Mammary epithelial cell (primary cell): ENCODE measurements at regions of chr14 and their contacts with region 1.

Region 1: GRCh38 chr14:22766456-22767322 is at the start of gene OXA1L:
- DNase-seq: peak; percentile 94
- H3K4me3 ChIP-seq: peak within 1 kb of the TSS; percentile 76 to 96 (median 78)
- H3K27ac ChIP-seq: peak within 1 kb of the TSS; percentile 92
- H3K4me1 ChIP-seq: peaks cover 12% of the 10 kb centered on the region
- H3K27me3 ChIP-seq: no peaks in the 10 kb centered on the region
- CTCF ChIP-seq: no peak
- total RNA-seq, gene OXA1L: 34.3 to 76.3 TPM

Region 2: GRCh38 chr14:21780429-21781084 is 986.1 kb before region 1 on chr14:
- CTCF ChIA-PET with region 1: no interaction called
- dilution Hi-C with region 1: no loop called
- in situ Hi-C with region 1: no loop called
- intact Hi-C with region 1: no loop called
- DNase-seq: no peak
- H3K4me3 ChIP-seq: no peak overlapping the region
- H3K27ac ChIP-seq: no peak overlapping the region
- H3K4me1 ChIP-seq: no peaks in the 10 kb centered on the region
- H3K27me3 ChIP-seq: no peaks in the 10 kb centered on the region
- CTCF ChIP-seq: no peak

Region 3: GRCh38 chr14:22358726-22359125 is 408.0 kb before region 1 on chr14:
- CTCF ChIA-PET with region 1: no interaction called
- dilution Hi-C with region 1: no loop called
- in situ Hi-C with region 1: no loop called
- intact Hi-C with region 1: no loop called
- DNase-seq: no peak
- H3K4me3 ChIP-seq: no peak overlapping the region
- H3K27ac ChIP-seq: no peak overlapping the region
- H3K4me1 ChIP-seq: no peaks in the 10 kb centered on the region
- H3K27me3 ChIP-seq: peaks cover 4% of the 10 kb centered on the region
- CTCF ChIP-seq: no peak

Region 4: GRCh38 chr14:22386924-22387775 is 379.5 kb before region 1 on chr14:
- CTCF ChIA-PET with region 1: no interaction called
- dilution Hi-C with region 1: no loop called
- in situ Hi-C with region 1: no loop called
- intact Hi-C with region 1: loop called (anchors 10 kb)
- DNase-seq: peak; percentile 39
- H3K4me3 ChIP-seq: no peak overlapping the region
- H3K27ac ChIP-seq: no peak overlapping the region
- H3K4me1 ChIP-seq: peaks cover 16% of the 10 kb centered on the region
- H3K27me3 ChIP-seq: peaks cover 4% of the 10 kb centered on the region
- CTCF ChIP-seq: peak; percentile 48 to 77

Region 5: GRCh38 chr14:22668417-22668816 is 98.3 kb before region 1 on chr14:
- CTCF ChIA-PET with region 1: no interaction called
- dilution Hi-C with region 1: loop called (anchors 5 kb)
- in situ Hi-C with region 1: no loop called
- intact Hi-C with region 1: no loop called
- DNase-seq: no peak
- H3K4me3 ChIP-seq: no peak overlapping the region
- H3K27ac ChIP-seq: no peak overlapping the region
- H3K4me1 ChIP-seq: no peaks in the 10 kb centered on the region
- H3K27me3 ChIP-seq: no peaks in the 10 kb centered on the region
- CTCF ChIP-seq: no peak

Region 6: DNA sequence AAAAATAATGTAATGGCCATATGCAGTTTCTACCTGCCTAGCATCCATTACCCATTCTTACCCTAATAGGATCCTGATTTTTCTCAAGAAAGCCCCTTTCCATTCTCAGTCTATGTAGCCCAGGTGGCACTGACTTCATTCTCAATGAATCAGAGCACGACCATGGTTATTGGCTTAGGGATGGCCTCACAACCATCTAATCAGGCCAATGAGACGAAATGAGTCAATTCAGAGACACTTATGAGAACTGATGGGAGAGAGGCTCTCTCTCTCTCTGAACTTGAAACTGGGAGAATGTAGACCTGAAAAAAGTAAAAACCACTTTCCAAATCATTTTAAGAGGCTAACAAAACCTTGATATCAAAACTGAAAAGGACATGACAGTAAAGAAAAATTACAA is 45.5 kb before region 1 on chr14:
- CTCF ChIA-PET with region 1: no interaction called
- dilution Hi-C with region 1: loop called (anchors 5 kb)
- in situ Hi-C with region 1: no loop called
- intact Hi-C with region 1: no loop called
- DNase-seq: no peak
- H3K4me3 ChIP-seq: no peak overlapping the region
- H3K27ac ChIP-seq: no peak overlapping the region
- H3K4me1 ChIP-seq: no peaks in the 10 kb centered on the region
- H3K27me3 ChIP-seq: no peaks in the 10 kb centered on the region
- CTCF ChIP-seq: no peak

Region 7: GRCh38 chr14:22753586-22753985 is 13.1 kb before region 1 on chr14:
- CTCF ChIA-PET with region 1: no interaction called
- dilution Hi-C with region 1: no loop called
- in situ Hi-C with region 1: no loop called
- intact Hi-C with region 1: no loop called
- DNase-seq: no peak
- H3K4me3 ChIP-seq: no peak overlapping the region
- H3K27ac ChIP-seq: no peak overlapping the region
- H3K4me1 ChIP-seq: no peaks in the 10 kb centered on the region
- H3K27me3 ChIP-seq: peaks cover 2% of the 10 kb centered on the region
- CTCF ChIP-seq: no peak

Region 8: DNA sequence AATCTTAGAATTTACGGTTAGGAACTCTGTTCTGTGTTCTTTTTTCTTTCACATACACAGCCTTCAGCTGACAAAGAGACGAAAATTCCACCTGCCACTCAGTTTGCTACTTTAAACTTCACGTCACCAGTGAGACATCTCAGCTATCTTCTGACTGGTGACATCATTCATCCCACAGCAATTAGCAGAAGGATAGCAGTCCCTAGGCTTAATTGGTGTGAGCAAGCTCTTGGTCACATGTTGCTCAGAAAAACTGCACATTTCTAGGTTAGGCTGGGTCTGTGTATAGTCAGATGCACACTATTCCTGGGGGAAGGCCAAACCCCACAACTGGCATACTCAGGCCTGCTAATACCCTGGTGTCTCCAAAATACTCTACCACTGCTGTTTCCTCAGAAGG is 24.6 kb after region 1 on chr14:
- CTCF ChIA-PET with region 1: no interaction called
- dilution Hi-C with region 1: no loop called
- in situ Hi-C with region 1: no loop called
- intact Hi-C with region 1: loop called (anchors 2 kb)
- DNase-seq: peak; percentile 78
- H3K4me3 ChIP-seq: no peak overlapping the region
- H3K27ac ChIP-seq: no peak overlapping the region
- H3K4me1 ChIP-seq: peaks cover 21% of the 10 kb centered on the region
- H3K27me3 ChIP-seq: no peaks in the 10 kb centered on the region
- CTCF ChIP-seq: no peak

Region 9: DNA sequence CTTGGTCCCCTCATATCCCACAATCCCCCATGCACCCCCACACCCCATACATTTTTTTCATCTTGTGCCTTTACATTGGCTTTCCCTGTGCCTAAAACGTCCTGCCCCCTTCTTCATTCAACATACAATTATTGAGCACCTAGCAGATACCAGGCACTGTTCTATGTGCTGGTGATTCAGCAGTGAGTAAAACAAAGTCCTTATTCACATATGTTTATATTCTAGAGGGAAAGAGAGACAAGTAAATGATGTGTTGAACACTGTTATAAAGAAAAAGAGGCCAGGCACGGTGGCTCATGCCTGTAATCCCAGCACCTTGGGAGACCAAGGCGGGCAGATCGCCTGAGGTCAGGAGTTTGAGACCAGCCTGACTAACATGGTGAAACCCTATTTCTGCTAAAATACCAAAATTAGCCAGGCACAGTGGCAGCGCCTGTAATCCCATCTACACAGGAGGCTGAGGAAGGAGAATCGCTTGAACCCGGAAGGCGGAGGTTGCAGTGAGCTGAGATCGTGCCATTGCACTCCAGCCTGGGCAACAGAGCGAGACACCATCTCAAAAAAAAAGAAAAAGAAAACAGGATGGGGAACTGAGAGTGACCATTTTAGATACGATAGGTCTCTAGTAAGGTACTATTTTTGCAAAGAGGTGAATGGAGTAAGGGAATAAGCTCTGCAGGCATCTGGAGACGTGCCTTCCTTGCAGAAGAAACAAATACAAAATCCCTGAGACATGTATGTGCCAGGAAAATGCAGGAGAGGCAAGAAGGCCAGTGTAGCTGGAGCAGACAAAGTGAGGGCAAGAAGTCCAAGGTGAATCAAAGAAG is 36.4 kb after region 1 on chr14:
- CTCF ChIA-PET with region 1: no interaction called
- dilution Hi-C with region 1: loop called (anchors 5 kb)
- in situ Hi-C with region 1: no loop called
- intact Hi-C with region 1: no loop called
- DNase-seq: no peak
- H3K4me3 ChIP-seq: no peak overlapping the region
- H3K27ac ChIP-seq: no peak overlapping the region
- H3K4me1 ChIP-seq: peaks cover 10% of the 10 kb centered on the region
- H3K27me3 ChIP-seq: peaks cover 2% of the 10 kb centered on the region
- CTCF ChIP-seq: no peak